Activated naive CD4-positive, alpha-beta T cell treated with anti-CD3 and anti-CD28 coated beads for 36 hours (primary cell): ENCODE measurements at regions of chr3 and their contacts with region 1.

Region 1: GRCh38 chr3:178950676-178951075 is 120.9 kb downstream of the ZMAT3 start:
- DNase-seq: peak; percentile 60
- H3K4me3 Mint-ChIP-seq: no peak overlapping the region
- H3K27ac Mint-ChIP-seq: peak overlapping the region; percentile 27
- H3K4me1 Mint-ChIP-seq: peaks cover 4% of the 10 kb centered on the region
- H3K27me3 Mint-ChIP-seq: no peaks in the 10 kb centered on the region

Region 2: GRCh38 chr3:178777718-178778411 is 172.8 kb before region 1 on chr3:
- CTCF ChIA-PET with region 1: no interaction called
- intact Hi-C with region 1: loop called (anchors 2 kb)
- DNase-seq: peak; percentile 10
- H3K4me3 Mint-ChIP-seq: no peak overlapping the region
- H3K27ac Mint-ChIP-seq: no peak overlapping the region
- H3K4me1 Mint-ChIP-seq: peaks cover 9% of the 10 kb centered on the region
- H3K27me3 Mint-ChIP-seq: no peaks in the 10 kb centered on the region

Region 3: GRCh38 chr3:179000144-179000543 is 49.5 kb after region 1 on chr3:
- CTCF ChIA-PET with region 1: no interaction called
- intact Hi-C with region 1: loop called (anchors 1 kb)
- DNase-seq: peak; percentile 12
- H3K4me3 Mint-ChIP-seq: no peak overlapping the region
- H3K27ac Mint-ChIP-seq: no peak overlapping the region
- H3K4me1 Mint-ChIP-seq: peaks cover 11% of the 10 kb centered on the region
- H3K27me3 Mint-ChIP-seq: no peaks in the 10 kb centered on the region